ENCODE measurements at regions of chr16 and their contacts with region 1.

Region 1: DNA sequence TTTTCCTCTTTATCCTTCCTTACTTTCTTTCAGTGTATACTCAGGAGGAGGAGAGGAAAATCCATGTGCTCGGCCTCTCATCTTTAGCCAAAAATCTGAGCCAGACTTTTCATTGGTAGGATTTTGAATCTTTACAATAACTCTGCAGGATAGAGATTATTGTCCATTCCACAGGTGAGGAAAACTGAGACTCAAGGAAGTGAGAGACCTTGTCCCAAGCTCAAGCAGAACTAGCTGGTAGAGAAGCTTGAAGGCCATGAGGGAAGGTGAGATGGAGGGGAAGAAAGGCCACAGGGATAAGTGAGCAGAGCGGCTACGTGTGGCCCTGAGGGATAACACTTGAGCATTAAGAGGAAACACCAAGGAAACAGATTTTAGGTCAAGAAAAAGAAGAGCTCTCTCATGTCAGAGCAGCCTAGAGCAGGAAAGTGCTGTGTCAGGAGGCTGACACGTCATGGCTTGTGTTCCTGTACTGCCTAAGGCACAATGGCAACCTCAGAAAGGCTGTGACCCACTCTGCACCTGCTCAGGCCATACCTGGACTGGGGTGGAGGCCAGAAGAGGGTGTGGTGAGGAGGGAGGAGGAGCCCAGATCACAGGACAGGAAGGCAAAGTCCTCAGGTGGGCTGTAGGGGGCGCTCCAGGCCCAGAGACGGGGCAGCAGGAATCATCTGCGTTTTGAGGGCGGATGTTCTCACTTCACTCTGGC is 11.9 kb downstream of the MT4 start:
- DNase-seq: peak; percentile 77 to 91 (median 85)
- ATAC-seq: peak; percentile 99
- H3K4me3 ChIP-seq: no peak overlapping the region
- H3K4me3 Mint-ChIP-seq: no peak overlapping the region
- H3K27ac ChIP-seq: no peak overlapping the region
- H3K27ac Mint-ChIP-seq: peak overlapping the region; percentile 72
- H3K4me1 ChIP-seq: peaks cover 4% of the 10 kb centered on the region
- H3K4me1 Mint-ChIP-seq: peaks cover 8% of the 10 kb centered on the region
- H3K27me3 ChIP-seq: no peaks in the 10 kb centered on the region
- H3K27me3 Mint-ChIP-seq: no peaks in the 10 kb centered on the region
- CTCF ChIP-seq: peak; percentile 82

Region 2: GRCh38 chr16:56519459-56520250 is 57.1 kb before region 1 on chr16 and contains the start of gene BBS2:
- CTCF ChIA-PET with region 1: interaction called, 12 read pairs
- POLR2A ChIA-PET with region 1: no interaction called
- intact Hi-C with region 1: loop called (anchors 2 kb)
- DNase-seq: peak; percentile 84 to 96 (median 92)
- ATAC-seq: peak; percentile 83
- H3K4me3 ChIP-seq: peak within 1 kb of the TSS; percentile 94 to 99
- H3K4me3 Mint-ChIP-seq: peak within 1 kb of the TSS; percentile 86
- H3K27ac ChIP-seq: peak within 1 kb of the TSS; percentile 82 to 92
- H3K27ac Mint-ChIP-seq: peak within 1 kb of the TSS; percentile 92
- H3K4me1 ChIP-seq: peaks cover 32% of the 10 kb centered on the region
- H3K4me1 Mint-ChIP-seq: peaks cover 50% of the 10 kb centered on the region
- H3K27me3 ChIP-seq: no peaks in the 10 kb centered on the region
- H3K27me3 Mint-ChIP-seq: no peaks in the 10 kb centered on the region
- CTCF ChIP-seq: no peak
- total RNA-seq, gene BBS2: 60.6 to 62.1 TPM

Region 3: GRCh38 chr16:56600398-56600999 is 23.8 kb after region 1 on chr16:
- CTCF ChIA-PET with region 1: interaction called, 23 read pairs
- POLR2A ChIA-PET with region 1: no interaction called
- intact Hi-C with region 1: no loop called
- DNase-seq: peak in 4 of 9 experiments; percentile 25 to 71 (median 48)
- ATAC-seq: peak; percentile 62
- H3K4me3 ChIP-seq: no peak overlapping the region
- H3K4me3 Mint-ChIP-seq: no peak overlapping the region
- H3K27ac ChIP-seq: no peak overlapping the region
- H3K27ac Mint-ChIP-seq: no peak overlapping the region
- H3K4me1 ChIP-seq: no peaks in the 10 kb centered on the region
- H3K4me1 Mint-ChIP-seq: peaks cover 1% of the 10 kb centered on the region
- H3K27me3 ChIP-seq: peaks cover 0 to 3% of the 10 kb centered on the region in 2 experiments
- H3K27me3 Mint-ChIP-seq: peaks cover 4% of the 10 kb centered on the region
- CTCF ChIP-seq: peak; percentile 42

Region 4: DNA sequence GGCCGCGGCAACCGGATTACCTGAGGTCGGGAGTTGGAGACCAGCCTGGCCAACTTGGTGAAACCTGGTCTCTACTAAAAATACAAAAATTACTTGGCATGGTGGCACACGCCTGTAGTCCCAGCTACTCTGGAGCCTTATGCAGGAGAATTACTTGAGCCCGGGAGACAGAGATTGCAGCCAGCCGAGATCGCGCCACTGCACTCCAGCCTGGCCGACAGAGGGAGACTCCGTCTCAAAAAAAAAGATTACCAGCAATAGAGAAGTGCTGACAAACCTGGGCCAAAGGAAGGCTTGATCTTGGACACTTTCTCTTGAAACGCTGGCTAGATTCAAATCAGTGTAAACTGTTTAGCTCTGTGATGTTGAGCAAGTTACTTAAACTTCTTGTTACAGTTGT is 97.2 kb after region 1 on chr16:
- CTCF ChIA-PET with region 1: interaction called, 6 read pairs
- POLR2A ChIA-PET with region 1: no interaction called
- intact Hi-C with region 1: loop called (anchors 2 kb)
- DNase-seq: peak in 4 of 9 experiments; percentile 23 to 57 (median 34)
- ATAC-seq: peak; percentile 32
- H3K4me3 ChIP-seq: no peak overlapping the region
- H3K4me3 Mint-ChIP-seq: no peak overlapping the region
- H3K27ac ChIP-seq: no peak overlapping the region
- H3K27ac Mint-ChIP-seq: peak overlapping the region; percentile 11
- H3K4me1 ChIP-seq: peaks cover 12% of the 10 kb centered on the region
- H3K4me1 Mint-ChIP-seq: peaks cover 27% of the 10 kb centered on the region
- H3K27me3 ChIP-seq: peaks cover 7 to 13% of the 10 kb centered on the region in 2 experiments
- H3K27me3 Mint-ChIP-seq: peaks cover 23% of the 10 kb centered on the region
- CTCF ChIP-seq: peak; percentile 52

Region 5: GRCh38 chr16:56716761-56717160 is 140.0 kb after region 1 on chr16:
- CTCF ChIA-PET with region 1: interaction called, 52 read pairs
- POLR2A ChIA-PET with region 1: interaction called, 3 read pairs
- intact Hi-C with region 1: no loop called
- DNase-seq: no peak
- ATAC-seq: no peak
- H3K4me3 ChIP-seq: no peak overlapping the region
- H3K4me3 Mint-ChIP-seq: no peak overlapping the region
- H3K27ac ChIP-seq: no peak overlapping the region
- H3K27ac Mint-ChIP-seq: no peak overlapping the region
- H3K4me1 ChIP-seq: no peaks in the 10 kb centered on the region
- H3K4me1 Mint-ChIP-seq: peaks cover 14% of the 10 kb centered on the region
- H3K27me3 ChIP-seq: no peaks in the 10 kb centered on the region
- H3K27me3 Mint-ChIP-seq: no peaks in the 10 kb centered on the region
- CTCF ChIP-seq: no peak

Region 6: DNA sequence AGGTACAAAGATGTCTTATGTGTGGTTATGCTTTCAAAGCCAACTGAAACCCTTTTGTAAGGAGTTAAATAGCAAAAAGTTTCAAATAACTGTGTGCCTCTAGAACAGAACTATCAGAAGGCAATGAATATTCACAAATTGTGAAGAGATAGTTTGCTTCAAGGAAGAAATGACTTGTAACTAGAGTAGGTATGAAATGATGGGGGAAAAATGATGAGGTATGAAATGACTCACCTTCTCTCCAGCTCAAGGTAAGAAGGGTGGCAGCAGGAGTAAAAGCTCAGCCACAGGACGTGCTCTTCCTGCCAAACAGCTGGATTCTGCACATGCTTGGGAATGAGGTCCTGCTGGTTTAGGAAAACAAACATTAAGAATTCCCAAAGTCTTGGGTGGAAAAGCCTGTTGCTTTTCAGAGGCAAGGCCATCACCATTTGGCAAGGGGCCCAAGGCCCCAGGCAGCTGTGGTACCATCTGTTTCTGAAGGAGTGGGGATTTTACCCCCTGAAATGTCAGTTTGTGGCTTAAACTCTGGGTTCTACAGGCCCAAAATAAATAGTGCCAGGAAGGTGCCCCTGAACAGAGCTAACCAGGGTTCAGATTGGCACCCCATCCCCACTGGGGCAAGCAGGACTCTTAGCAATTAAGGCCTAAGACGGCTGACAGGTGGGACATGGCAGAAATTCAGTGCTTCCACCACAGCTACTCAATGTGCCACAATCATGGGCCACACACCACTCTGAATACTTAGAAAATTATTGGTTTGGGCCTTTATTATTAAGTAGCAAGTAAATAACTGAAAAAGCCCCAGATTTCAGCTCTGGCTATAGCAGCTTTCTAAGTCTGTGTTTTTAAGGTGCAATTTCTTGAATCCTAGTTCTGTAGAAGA is 368.5 kb after region 1 on chr16:
- CTCF ChIA-PET with region 1: no interaction called
- POLR2A ChIA-PET with region 1: no interaction called
- intact Hi-C with region 1: loop called in 1 of 2 experiments (anchors 10 kb)
- DNase-seq: no peak
- ATAC-seq: peak; percentile 37
- H3K4me3 ChIP-seq: no peak overlapping the region
- H3K4me3 Mint-ChIP-seq: no peak overlapping the region
- H3K27ac ChIP-seq: peak overlapping the region in 1 of 2 experiments; percentile 13
- H3K27ac Mint-ChIP-seq: peak overlapping the region; percentile 71
- H3K4me1 ChIP-seq: peaks cover 2% of the 10 kb centered on the region
- H3K4me1 Mint-ChIP-seq: peaks cover 10% of the 10 kb centered on the region
- H3K27me3 ChIP-seq: no peaks in the 10 kb centered on the region
- H3K27me3 Mint-ChIP-seq: no peaks in the 10 kb centered on the region
- CTCF ChIP-seq: no peak

Measured in CD8-positive, alpha-beta T cell (primary cell).